A673 (cell line): ENCODE measurements at regions of chr15 and their contacts with region 1.

Region 1: DNA sequence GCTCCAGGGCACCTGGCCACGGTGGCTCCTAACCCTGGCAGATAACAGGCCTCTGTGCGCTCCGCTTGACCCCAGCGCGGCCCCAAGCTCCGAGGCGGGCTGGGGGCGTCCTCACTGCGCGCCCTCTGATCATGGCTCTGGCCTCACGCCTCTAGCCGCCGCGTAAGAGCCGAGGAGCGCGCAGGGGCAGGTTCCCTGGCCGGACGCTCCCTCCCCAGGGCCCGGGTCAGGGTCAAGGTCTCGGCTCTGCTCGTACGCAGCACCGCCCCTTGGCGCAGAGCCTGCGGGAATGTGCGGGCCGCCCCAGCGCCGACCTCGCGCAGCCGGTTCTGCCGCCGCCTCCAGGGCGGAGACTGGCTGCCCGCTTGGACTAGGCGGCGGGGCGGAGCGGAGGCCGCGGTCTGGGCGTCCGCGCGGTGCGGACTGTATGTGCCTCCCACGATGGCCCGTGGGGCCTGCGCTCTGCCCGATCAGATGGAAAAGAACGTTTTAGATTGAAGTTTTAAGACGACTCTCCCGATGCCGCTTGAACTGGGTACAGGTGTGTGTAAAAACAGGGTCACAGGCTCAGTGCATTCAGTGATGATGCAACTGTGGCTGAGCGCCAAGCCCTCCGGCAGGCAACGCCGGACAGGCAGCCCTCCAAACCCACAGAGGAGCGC is 40.8 kb downstream of the CHST14 start:
- DNase-seq: no peak
- H3K4me3 ChIP-seq: peak overlapping the region; percentile 36
- H3K27ac ChIP-seq: no peak overlapping the region
- H3K4me1 ChIP-seq: no peaks in the 10 kb centered on the region
- H3K27me3 ChIP-seq: peaks cover 8% of the 10 kb centered on the region
- CTCF ChIP-seq: no peak

Region 2: GRCh38 chr15:39976291-39977274 is 535.0 kb before region 1 on chr15:
- CTCF ChIA-PET with region 1: no interaction called
- POLR2A ChIA-PET with region 1: no interaction called
- intact Hi-C with region 1: no loop called
- DNase-seq: peak; percentile 84
- H3K4me3 ChIP-seq: peak overlapping the region; percentile 58
- H3K27ac ChIP-seq: peak overlapping the region; percentile 44
- H3K4me1 ChIP-seq: peaks cover 13% of the 10 kb centered on the region
- H3K27me3 ChIP-seq: no peaks in the 10 kb centered on the region
- CTCF ChIP-seq: peak; percentile 86

Region 3: DNA sequence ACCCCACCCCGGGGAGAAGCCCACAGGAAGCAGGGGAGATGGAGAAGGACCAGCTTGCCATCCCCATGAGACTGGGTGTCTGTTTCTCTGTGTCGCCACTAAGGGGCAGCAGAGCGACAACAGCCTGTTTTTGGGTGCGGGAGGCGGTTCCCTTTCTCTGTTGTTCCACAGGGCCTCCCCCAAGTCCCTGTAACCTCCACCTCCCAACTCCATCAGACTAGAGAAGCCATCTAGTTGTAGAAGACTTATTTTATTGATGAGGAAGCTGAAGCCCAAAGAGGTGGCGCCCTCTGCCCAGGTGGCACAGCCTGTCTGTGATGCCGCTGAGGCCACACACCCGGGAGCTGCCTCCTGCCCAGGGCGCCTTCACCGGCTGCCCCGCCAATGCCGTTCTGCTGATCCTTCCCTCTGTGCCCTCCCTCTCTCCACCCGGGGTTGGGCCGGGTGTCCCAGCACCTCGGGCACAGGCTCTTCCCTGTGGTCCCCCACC is 166.9 kb before region 1 on chr15:
- CTCF ChIA-PET with region 1: no interaction called
- POLR2A ChIA-PET with region 1: no interaction called
- intact Hi-C with region 1: loop called (anchors 10 kb)
- DNase-seq: peak; percentile 74
- H3K4me3 ChIP-seq: no peak overlapping the region
- H3K27ac ChIP-seq: no peak overlapping the region
- H3K4me1 ChIP-seq: peaks cover 18% of the 10 kb centered on the region
- H3K27me3 ChIP-seq: no peaks in the 10 kb centered on the region
- CTCF ChIP-seq: peak; percentile 89

Region 4: GRCh38 chr15:40582726-40583246 is 71.2 kb after region 1 on chr15:
- CTCF ChIA-PET with region 1: no interaction called
- POLR2A ChIA-PET with region 1: no interaction called
- intact Hi-C with region 1: no loop called
- DNase-seq: no peak
- H3K4me3 ChIP-seq: peak overlapping the region; percentile 19
- H3K27ac ChIP-seq: no peak overlapping the region
- H3K4me1 ChIP-seq: no peaks in the 10 kb centered on the region
- H3K27me3 ChIP-seq: no peaks in the 10 kb centered on the region
- CTCF ChIP-seq: no peak

Region 5: DNA sequence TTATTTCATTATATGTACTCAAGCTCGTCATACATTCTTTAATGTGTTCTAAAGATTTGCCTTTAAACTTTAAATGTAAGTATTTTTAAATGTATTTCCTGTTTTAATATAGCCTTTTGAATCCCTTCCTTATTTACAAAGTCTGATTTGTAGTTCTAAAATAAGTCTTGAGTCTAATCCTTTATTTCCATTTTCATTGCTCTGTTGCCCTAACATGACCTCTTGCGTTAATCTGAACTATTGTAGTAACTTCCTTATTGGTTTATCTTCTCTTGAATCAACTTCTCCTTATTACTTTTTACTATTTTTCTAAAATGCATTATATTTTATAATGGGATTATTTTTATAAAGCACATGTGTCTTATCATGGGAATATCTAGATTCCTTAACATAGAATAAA is 106.4 kb after region 1 on chr15:
- CTCF ChIA-PET with region 1: no interaction called
- POLR2A ChIA-PET with region 1: no interaction called
- intact Hi-C with region 1: no loop called
- DNase-seq: peak; percentile 24
- H3K4me3 ChIP-seq: no peak overlapping the region
- H3K27ac ChIP-seq: no peak overlapping the region
- H3K4me1 ChIP-seq: no peaks in the 10 kb centered on the region
- H3K27me3 ChIP-seq: no peaks in the 10 kb centered on the region
- CTCF ChIP-seq: no peak

Region 6: GRCh38 chr15:40782580-40783227 is 271.1 kb after region 1 on chr15:
- CTCF ChIA-PET with region 1: no interaction called
- POLR2A ChIA-PET with region 1: no interaction called
- intact Hi-C with region 1: loop called (anchors 5 kb)
- DNase-seq: peak; percentile 56
- H3K4me3 ChIP-seq: no peak overlapping the region
- H3K27ac ChIP-seq: no peak overlapping the region
- H3K4me1 ChIP-seq: peaks cover 9% of the 10 kb centered on the region
- H3K27me3 ChIP-seq: no peaks in the 10 kb centered on the region
- CTCF ChIP-seq: peak; percentile 68

Region 7: GRCh38 chr15:40807028-40807887 is 295.7 kb after region 1 on chr15 and contains the starts of genes DNAJC17 and ZFYVE19:
- CTCF ChIA-PET with region 1: no interaction called
- POLR2A ChIA-PET with region 1: no interaction called
- intact Hi-C with region 1: no loop called
- DNase-seq: peak; percentile 99
- H3K4me3 ChIP-seq: peak within 1 kb of the TSS; percentile 97
- H3K27ac ChIP-seq: peak within 1 kb of the TSS; percentile 94
- H3K4me1 ChIP-seq: peaks cover 6% of the 10 kb centered on the region
- H3K27me3 ChIP-seq: no peaks in the 10 kb centered on the region
- CTCF ChIP-seq: no peak; the same call in 1 of the 2 replicates
- total RNA-seq, gene DNAJC17: 34.5 and 37.1 TPM in 2 replicates
- total RNA-seq, gene ZFYVE19: 26.4 and 27.1 TPM in 2 replicates